T-cell (primary cell): ENCODE measurements at regions of chr1 and their contacts with region 1.

Region 1: GRCh38 chr1:180953291-180954004 is 40.8 kb downstream of the KIAA1614 start:
- DNase-seq: peak in 7 of 35 experiments; percentile 2 to 8 (median 5)
- ATAC-seq: no peak
- H3K4me3 ChIP-seq: peak overlapping the region; percentile 29 to 51
- H3K4me3 Mint-ChIP-seq: peak overlapping the region; percentile 76 to 80 (median 78)
- H3K27ac ChIP-seq: no peak overlapping the region
- H3K27ac Mint-ChIP-seq: no peak overlapping the region
- H3K4me1 ChIP-seq: peaks cover 0 to 15% of the 10 kb centered on the region in 2 experiments
- H3K4me1 Mint-ChIP-seq: peaks cover 0 to 9% (median 7%) of the 10 kb centered on the region in 3 donors
- H3K27me3 ChIP-seq: no peaks in the 10 kb centered on the region
- H3K27me3 Mint-ChIP-seq: no peaks in the 10 kb centered on the region

Region 2: DNA sequence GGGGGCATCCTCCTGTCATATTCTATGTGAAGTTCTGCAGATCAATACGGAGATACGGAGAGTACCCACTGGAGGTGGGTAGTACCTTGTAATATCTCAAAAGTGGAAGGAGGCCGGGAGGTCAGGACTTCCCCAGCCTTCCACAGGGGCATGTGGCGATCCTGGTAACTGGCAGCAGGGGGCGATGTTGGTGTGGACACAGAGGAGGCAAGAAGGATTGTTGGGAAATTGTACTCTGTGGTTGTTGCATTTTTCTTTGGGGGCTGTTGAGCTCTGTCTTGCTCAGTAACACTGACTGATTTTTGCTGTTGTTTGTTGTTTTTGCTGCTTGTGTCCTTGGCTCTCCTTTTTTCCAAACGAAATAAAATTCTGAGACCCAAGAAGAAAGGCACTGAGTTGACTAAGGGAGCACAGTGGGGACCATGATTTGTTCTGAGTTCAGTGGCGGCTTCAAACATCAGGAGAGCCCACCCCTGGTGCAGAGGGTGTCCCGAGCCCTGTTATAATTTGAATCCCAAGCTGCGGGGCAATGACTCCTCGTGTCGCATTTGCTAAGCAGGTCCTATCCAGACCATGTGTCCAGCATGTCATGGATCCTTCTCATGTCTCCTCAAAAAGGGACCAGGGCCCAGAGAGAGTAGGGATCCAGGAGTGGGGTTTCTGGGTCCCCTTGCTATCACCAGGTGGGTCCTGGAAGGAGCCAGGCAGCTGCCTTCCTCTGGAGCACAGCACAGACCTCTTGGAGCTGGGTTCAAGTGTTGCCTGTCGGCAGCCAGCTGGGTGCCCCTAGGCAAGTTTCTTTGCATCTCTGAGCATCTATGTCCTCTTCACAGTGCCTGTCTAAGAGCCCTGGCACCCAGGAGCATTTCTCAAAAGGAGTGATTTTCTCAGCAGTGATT is 700.6 kb before region 1 on chr1:
- CTCF ChIA-PET with region 1: interaction called in 1 of 2 experiments, 10 read pairs
- POLR2A ChIA-PET with region 1: no interaction called
- DNase-seq: peak in 33 of 35 experiments; percentile 23 to 70 (median 50)
- ATAC-seq: peak; percentile 50 to 69 (median 52)
- H3K4me3 ChIP-seq: no peak overlapping the region
- H3K4me3 Mint-ChIP-seq: no peak overlapping the region
- H3K27ac ChIP-seq: no peak overlapping the region
- H3K27ac Mint-ChIP-seq: no peak overlapping the region
- H3K4me1 ChIP-seq: no peaks in the 10 kb centered on the region
- H3K4me1 Mint-ChIP-seq: peaks cover 2 to 4% (median 3%) of the 10 kb centered on the region in 3 donors
- H3K27me3 ChIP-seq: peaks cover 0 to 90% of the 10 kb centered on the region in 2 experiments
- H3K27me3 Mint-ChIP-seq: peaks cover 54 to 73% of the 10 kb centered on the region in 2 donors